Naive thymus-derived CD4-positive, alpha-beta T cell (primary cell): ENCODE measurements at regions of chr1 and their contacts with region 1.

Region 1: DNA sequence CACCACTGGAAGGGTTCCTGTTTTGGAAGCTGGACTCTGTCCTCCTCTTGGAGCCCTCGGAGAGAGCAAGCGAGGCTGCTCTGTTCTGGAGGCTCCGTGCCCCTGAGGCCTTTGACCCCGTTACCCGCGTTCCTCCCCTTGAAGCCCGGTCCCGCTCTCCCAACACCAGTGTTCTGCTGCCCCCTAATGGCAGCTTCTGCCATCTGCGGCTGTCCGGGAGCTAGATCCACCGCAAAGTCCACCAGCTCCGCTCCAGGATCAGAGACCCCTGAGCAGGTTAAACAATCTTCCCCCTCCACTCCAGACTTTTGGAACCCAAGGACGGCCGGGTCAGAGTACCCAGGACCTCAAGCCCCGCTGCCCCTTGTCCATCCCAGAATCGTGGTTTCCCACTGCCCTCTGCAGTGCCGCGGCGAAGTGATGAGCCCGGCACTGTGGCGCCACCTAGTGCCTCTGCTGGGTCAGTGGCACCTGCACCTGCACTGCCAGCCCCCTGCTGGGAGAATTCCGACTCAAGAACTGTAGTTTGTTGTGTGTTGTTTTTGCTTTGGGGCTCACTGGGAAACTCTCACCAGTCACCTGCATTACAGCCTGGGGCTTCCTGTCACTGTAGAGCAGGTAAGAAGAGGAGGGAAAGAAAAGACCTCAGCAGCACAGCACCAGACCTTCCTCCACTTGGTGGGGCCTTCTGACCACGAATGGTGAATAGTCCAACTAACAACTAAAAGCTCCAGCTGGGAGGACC is 63.5 kb upstream of the NFASC start:
- DNase-seq: peak; percentile 74 to 93 (median 85)
- ATAC-seq: peak; percentile 97
- H3K4me3 ChIP-seq: peak overlapping the region; percentile 76
- H3K4me3 Mint-ChIP-seq: peak overlapping the region; percentile 40 to 97 (median 88)
- H3K27ac ChIP-seq: no peak overlapping the region
- H3K27ac Mint-ChIP-seq: peak overlapping the region; percentile 40 to 81 (median 63)
- H3K4me1 ChIP-seq: no peaks in the 10 kb centered on the region
- H3K4me1 Mint-ChIP-seq: peaks cover 0 to 22% (median 15%) of the 10 kb centered on the region in 7 donors
- H3K27me3 ChIP-seq: no peaks in the 10 kb centered on the region
- H3K27me3 Mint-ChIP-seq: peaks cover 0 to 28% (median 0%) of the 10 kb centered on the region in 5 donors

Region 2: GRCh38 chr1:204151552-204152309 is 655.4 kb before region 1 on chr1 and contains the start of gene ETNK2:
- CTCF ChIA-PET with region 1: no interaction called
- POLR2A ChIA-PET with region 1: no interaction called
- intact Hi-C with region 1: loop called in 1 of 2 experiments (anchors 2 kb)
- DNase-seq: peak; percentile 50 to 66 (median 58)
- ATAC-seq: peak; percentile 90
- H3K4me3 ChIP-seq: peak within 1 kb of the TSS; percentile 63
- H3K4me3 Mint-ChIP-seq: peak within 1 kb of the TSS; percentile 59 to 86 (median 76)
- H3K27ac ChIP-seq: peak within 1 kb of the TSS; percentile 72
- H3K27ac Mint-ChIP-seq: peak within 1 kb of the TSS in 5 of 9 donors; percentile 41 to 77 (median 56)
- H3K4me1 ChIP-seq: peaks cover 4% of the 10 kb centered on the region in 2 donors
- H3K4me1 Mint-ChIP-seq: peaks cover 2 to 17% (median 9%) of the 10 kb centered on the region in 7 donors
- H3K27me3 ChIP-seq: no peaks in the 10 kb centered on the region
- H3K27me3 Mint-ChIP-seq: peaks cover 0 to 35% (median 0%) of the 10 kb centered on the region in 5 donors
- total RNA-seq, gene ETNK2: 0.17 to 16.9 (median 4.9) TPM

Region 3: GRCh38 chr1:204431310-204432165 is 375.6 kb before region 1 on chr1:
- CTCF ChIA-PET with region 1: interaction called, 14 read pairs
- POLR2A ChIA-PET with region 1: no interaction called
- intact Hi-C with region 1: loop called in 1 of 2 experiments (anchors 1 kb)
- DNase-seq: peak; percentile 52 to 75 (median 69)
- ATAC-seq: peak; percentile 88
- H3K4me3 ChIP-seq: no peak overlapping the region
- H3K4me3 Mint-ChIP-seq: no peak overlapping the region
- H3K27ac ChIP-seq: no peak overlapping the region
- H3K27ac Mint-ChIP-seq: peak overlapping the region in 5 of 9 donors; percentile 6 to 69 (median 42)
- H3K4me1 ChIP-seq: no peaks in the 10 kb centered on the region
- H3K4me1 Mint-ChIP-seq: peaks cover 0 to 13% (median 4%) of the 10 kb centered on the region in 7 donors
- H3K27me3 ChIP-seq: no peaks in the 10 kb centered on the region
- H3K27me3 Mint-ChIP-seq: no peaks in the 10 kb centered on the region

Region 4: GRCh38 chr1:204565617-204566582 is 241.2 kb before region 1 on chr1:
- CTCF ChIA-PET with region 1: interaction called, 15 read pairs
- POLR2A ChIA-PET with region 1: no interaction called
- intact Hi-C with region 1: loop called (anchors 1 kb)
- DNase-seq: peak in 8 of 9 donors; percentile 47 to 80 (median 68)
- ATAC-seq: peak; percentile 92
- H3K4me3 ChIP-seq: no peak overlapping the region
- H3K4me3 Mint-ChIP-seq: peak overlapping the region in 5 of 10 donors; percentile 3 to 51 (median 15)
- H3K27ac ChIP-seq: no peak overlapping the region
- H3K27ac Mint-ChIP-seq: peak overlapping the region; percentile 58 to 84 (median 74)
- H3K4me1 ChIP-seq: peaks cover 14 to 37% of the 10 kb centered on the region in 2 donors
- H3K4me1 Mint-ChIP-seq: peaks cover 22 to 62% (median 55%) of the 10 kb centered on the region in 7 donors
- H3K27me3 ChIP-seq: no peaks in the 10 kb centered on the region
- H3K27me3 Mint-ChIP-seq: no peaks in the 10 kb centered on the region

Region 5: DNA sequence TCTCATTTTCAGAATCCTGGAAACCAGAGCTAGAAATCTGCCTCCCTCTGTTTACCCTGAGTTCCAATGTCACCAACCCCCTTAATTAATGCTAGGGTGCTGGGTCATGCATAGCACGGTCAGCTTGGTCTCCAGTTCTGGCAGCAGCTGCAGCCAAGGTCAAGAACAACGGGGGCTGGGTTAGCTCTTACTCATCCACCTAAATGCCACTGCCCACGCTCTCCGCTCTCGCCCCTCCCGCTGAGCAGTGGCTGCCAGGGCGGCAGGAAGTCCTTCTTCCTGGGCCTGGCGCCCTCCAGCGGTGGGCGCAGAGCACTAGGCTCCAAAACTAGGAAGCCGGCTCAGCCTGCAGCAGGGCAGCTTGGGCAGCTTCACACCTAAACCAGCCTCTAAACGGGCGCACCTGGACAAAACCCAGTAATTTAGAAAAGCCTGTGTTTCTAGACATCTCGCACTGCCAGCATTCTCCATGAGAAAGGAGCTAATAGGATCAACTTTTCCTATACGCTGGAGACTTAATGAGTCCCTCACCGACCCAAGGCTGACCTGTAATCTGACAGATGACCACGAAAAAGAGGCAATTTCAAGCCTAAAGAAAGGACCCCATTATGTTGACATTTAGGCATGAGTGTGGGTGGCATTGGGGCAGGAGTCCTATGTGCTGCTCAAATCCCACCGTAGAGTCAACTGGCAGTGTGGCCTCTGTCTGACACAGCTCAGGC is 43.2 kb before region 1 on chr1:
- CTCF ChIA-PET with region 1: interaction called, 14 read pairs
- POLR2A ChIA-PET with region 1: interaction called, 4 read pairs
- intact Hi-C with region 1: loop called (anchors 1 to 2 kb)
- DNase-seq: peak; percentile 44 to 80 (median 66)
- ATAC-seq: peak; percentile 96
- H3K4me3 ChIP-seq: peak overlapping the region; percentile 27
- H3K4me3 Mint-ChIP-seq: peak overlapping the region; percentile 46 to 74 (median 60)
- H3K27ac ChIP-seq: no peak overlapping the region
- H3K27ac Mint-ChIP-seq: no peak overlapping the region
- H3K4me1 ChIP-seq: peaks cover 4 to 9% of the 10 kb centered on the region in 2 donors
- H3K4me1 Mint-ChIP-seq: peaks cover 6 to 16% (median 7%) of the 10 kb centered on the region in 7 donors
- H3K27me3 ChIP-seq: no peaks in the 10 kb centered on the region
- H3K27me3 Mint-ChIP-seq: peaks cover 3 to 41% (median 11%) of the 10 kb centered on the region in 5 donors

Region 6: GRCh38 chr1:204819495-204819894 is 12.4 kb after region 1 on chr1:
- CTCF ChIA-PET with region 1: interaction called, 26 read pairs
- POLR2A ChIA-PET with region 1: no interaction called
- intact Hi-C with region 1: no loop called
- DNase-seq: no peak
- ATAC-seq: no peak
- H3K4me3 ChIP-seq: no peak overlapping the region
- H3K4me3 Mint-ChIP-seq: no peak overlapping the region
- H3K27ac ChIP-seq: no peak overlapping the region
- H3K27ac Mint-ChIP-seq: no peak overlapping the region
- H3K4me1 ChIP-seq: no peaks in the 10 kb centered on the region
- H3K4me1 Mint-ChIP-seq: no peaks in the 10 kb centered on the region
- H3K27me3 ChIP-seq: peaks cover 0 to 3% of the 10 kb centered on the region in 2 donors
- H3K27me3 Mint-ChIP-seq: peaks cover 11 to 30% (median 25%) of the 10 kb centered on the region in 5 donors

Region 7: DNA sequence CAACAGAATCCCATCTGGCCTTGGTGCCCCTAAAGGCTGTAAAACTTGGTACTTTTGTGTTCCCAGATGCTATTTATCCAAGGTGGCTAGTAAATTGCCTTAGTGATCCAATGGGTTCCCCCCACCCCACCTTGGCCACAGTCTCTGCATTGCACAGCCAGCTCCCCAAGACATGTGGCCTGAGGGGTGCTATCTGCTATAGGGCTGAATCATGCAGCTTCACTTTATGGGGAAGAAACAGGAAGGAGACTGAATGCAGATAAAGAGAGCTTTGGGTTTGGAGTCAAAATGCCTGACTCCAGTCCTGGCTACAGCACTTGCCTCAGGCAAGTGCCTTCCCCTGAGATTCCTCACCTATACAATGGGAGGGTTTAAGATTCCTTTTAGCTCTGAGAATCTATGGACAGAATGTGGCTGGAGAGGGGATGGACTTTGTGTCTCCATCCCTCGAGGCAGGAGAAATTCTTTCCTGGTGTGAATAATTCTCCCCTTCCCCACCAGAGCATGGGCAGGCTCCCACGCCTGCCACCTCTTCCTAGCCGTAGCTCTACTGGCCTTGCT is 1252.3 kb after region 1 on chr1:
- CTCF ChIA-PET with region 1: no interaction called
- POLR2A ChIA-PET with region 1: no interaction called
- intact Hi-C with region 1: no loop called
- DNase-seq: no peak
- ATAC-seq: peak; percentile 41
- H3K4me3 ChIP-seq: no peak overlapping the region
- H3K4me3 Mint-ChIP-seq: no peak overlapping the region
- H3K27ac ChIP-seq: no peak overlapping the region
- H3K27ac Mint-ChIP-seq: peak overlapping the region in 1 of 9 donors; percentile 9
- H3K4me1 ChIP-seq: no peaks in the 10 kb centered on the region
- H3K4me1 Mint-ChIP-seq: no peaks in the 10 kb centered on the region
- H3K27me3 ChIP-seq: no peaks in the 10 kb centered on the region
- H3K27me3 Mint-ChIP-seq: peaks cover 0 to 52% (median 0%) of the 10 kb centered on the region in 5 donors